Mucosa of descending colon (tissue), 3 donors: ENCODE measurements at regions of chr6 and their contacts with region 1.

Region 1: DNA sequence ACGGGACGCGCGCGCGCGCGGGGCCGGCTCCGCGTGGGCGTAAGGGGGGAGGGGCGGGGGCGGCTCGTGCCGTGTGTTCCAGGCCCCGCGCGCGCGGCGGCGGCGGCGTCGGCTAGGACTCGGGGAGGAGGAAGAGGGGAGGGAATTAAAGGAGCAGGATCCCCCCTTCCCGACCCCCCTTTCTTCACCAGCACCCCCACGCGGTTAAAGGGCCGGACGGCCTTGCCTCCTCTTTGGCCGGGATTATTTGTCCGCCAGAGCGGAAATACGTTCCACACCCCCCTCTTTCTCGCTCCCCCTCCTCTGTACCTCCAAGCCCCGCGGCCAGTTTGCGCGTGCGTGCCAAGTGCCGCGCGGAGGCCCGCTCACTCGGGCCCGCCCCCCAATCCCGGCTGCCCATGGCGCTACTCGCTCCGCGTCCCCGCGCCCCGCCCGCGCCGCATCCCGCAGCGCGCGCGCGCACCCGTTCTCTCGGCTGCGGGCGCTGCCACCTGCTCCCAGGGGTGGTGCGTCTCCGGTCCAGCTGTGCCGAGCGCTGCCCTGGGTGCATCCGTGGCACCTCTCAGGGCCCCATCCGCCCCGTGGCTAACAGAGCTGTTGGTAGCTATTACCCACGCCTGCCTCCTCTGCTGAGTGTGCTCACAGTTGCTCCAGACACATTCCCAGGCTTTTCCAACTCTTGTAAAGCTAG is at the start of gene ZBTB12:
- DNase-seq: peak; percentile 89 to 94 (median 92)
- ATAC-seq: peak; percentile 77
- H3K4me3 ChIP-seq: peak within 1 kb of the TSS; percentile 26
- H3K4me1 ChIP-seq: peaks cover 22% of the 10 kb centered on the region
- CTCF ChIP-seq: no peak
- total RNA-seq, gene ZBTB12: 2.3 to 6.2 (median 3.4) TPM

Region 2: DNA sequence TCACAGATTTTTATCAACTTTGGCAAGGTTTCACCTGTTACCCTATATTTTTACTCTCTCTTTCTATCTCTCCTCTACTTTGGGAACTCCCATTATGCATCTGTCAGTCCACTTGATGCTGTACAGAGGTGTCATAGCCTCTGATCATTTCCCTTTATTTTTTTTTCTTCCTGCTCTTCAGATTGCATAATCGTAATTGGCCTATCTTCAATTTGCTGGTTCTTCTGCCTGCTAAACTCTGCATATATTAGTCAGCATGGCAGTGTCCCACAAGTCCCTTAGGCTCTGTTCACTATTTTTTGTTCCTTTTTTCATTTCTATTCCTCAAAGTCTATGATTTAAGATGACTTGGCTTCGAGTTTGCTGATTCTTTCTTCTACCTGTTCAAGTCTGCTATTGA is 448.8 kb before region 1 on chr6:
- intact Hi-C with region 1: no loop called
- DNase-seq: no peak
- ATAC-seq: no peak
- H3K4me3 ChIP-seq: no peak overlapping the region
- H3K4me1 ChIP-seq: no peaks in the 10 kb centered on the region
- CTCF ChIP-seq: no peak

Region 3: DNA sequence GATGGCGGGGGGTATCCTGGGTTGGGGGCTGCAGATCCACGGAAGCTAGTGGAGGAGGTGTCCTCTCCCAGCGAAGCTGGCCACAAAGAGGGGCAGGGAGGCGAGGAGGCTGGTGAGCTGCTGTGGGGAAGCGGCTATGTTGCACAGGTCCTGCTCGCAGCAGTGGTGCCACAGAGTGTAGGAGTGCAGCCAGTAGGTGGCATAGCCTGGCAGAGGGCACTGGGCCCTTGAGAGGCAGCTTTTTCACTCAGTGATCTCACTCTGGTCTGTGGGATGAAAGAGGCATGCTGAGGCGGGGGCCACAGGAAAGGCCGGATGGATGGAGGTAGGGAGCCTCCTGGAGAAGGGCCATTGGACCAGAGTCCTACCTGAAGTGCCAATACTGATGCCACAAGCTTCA is 189.8 kb before region 1 on chr6:
- intact Hi-C with region 1: no loop called
- DNase-seq: peak in 1 of 3 donors; percentile 47
- ATAC-seq: peak; percentile 63
- H3K4me3 ChIP-seq: no peak overlapping the region
- H3K4me1 ChIP-seq: peaks cover 17% of the 10 kb centered on the region
- CTCF ChIP-seq: no peak

Region 4: DNA sequence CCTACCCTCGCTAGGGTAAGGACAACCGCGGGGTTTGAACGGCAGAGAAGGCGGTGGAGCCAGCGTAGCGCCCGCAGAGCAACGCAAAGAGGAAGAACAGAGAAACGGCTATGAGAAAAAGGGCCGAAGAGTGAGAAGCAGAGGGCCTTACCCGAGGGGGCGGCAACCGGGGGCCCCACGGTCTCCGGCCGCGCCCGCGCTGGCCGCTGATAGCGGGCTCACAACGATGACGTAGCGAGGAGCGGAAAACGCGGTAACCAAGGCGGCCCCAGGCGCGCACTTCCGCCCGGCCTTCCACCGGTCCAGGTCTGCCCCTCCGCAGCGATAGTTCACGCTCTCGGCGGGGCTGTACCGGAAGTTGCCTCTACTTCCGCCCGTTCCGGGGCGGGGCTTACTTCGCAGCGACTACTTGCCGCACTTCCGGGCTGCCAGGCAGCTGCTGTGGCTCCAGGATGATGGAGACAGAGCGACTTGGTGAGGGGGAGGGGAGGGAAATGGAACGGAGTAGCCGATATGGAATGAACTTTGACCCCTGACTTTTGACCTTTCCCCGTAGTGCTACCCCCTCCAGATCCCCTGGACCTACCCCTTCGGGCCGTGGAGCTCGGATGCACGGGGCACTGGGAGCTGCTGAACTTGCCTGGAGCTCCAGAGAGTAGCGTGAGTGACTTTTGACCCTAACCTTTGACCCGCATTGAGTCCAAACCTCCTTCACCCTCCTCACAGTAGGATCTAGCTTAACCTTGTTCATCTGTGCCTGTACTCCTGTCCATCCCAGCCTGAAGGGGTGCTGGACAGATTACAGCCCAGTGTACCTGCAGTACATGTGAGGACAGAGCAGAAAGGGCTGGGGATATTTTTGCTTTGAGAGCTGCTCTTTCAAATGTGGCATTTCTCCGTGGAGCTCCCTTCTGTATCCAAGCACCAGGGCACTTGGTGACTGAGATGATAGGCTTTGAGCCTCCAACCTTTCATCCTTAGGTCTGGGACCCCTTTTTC is 56.9 kb after region 1 on chr6 and contains the starts of genes NELFE and SKIC2:
- intact Hi-C with region 1: loop called in 1 of 2 experiments (anchors 10 kb)
- DNase-seq: peak; percentile 99 to 100 (median 99)
- ATAC-seq: peak; percentile 99
- H3K4me3 ChIP-seq: peak within 1 kb of the TSS; percentile 68
- H3K4me1 ChIP-seq: peaks cover 12% of the 10 kb centered on the region
- CTCF ChIP-seq: no peak
- total RNA-seq, gene NELFE: 44.9 to 52.4 (median 51.8) TPM
- total RNA-seq, gene SKIC2: 58.6 to 87.2 (median 81.2) TPM

Region 5: GRCh38 chr6:32439602-32440214 is 537.6 kb after region 1 on chr6 and contains the start of gene HLA-DRA:
- intact Hi-C with region 1: no loop called
- DNase-seq: peak in 1 of 3 donors; percentile 39
- ATAC-seq: peak; percentile 91
- H3K4me3 ChIP-seq: no peak within 1 kb of the TSS
- H3K4me1 ChIP-seq: no peaks in the 10 kb centered on the region
- CTCF ChIP-seq: no peak
- total RNA-seq, gene HLA-DRA: 69.0 to 333 (median 115) TPM